ENCODE measurements at regions of chr11 and their contacts with region 1.

Region 1: DNA sequence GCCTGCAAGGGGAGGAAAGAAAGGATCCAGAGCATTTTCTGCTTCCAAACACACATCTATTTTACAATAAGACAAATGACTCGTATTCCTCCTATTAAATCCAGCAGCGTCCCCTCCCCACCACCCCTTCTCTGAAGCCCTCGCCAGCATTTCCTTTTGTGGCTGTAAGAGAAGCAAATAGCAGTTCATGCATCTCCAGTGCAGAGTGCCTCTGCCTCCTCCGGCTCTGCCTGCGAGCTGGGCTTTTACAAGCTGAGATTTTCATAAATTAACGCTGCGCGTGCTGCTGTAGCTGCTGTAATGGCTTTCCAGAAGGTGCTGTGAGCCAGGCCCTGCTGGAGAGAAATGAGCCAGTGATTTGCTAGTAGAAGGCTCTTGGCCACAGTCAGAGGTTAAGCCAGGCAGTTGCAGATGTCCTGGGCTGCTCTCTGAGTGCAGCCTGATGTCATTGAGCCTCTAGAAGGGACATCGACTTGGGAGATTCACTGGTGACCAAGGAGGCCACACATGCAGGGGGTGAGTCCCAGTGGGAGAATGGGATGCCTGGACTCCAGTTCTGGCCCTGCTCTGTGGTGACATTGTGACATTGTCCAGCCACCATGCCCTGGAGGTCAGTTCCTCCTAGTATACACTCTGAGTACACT is 134.5 kb upstream of the NAV2 start:
- DNase-seq: peak; percentile 57
- H3K4me3 ChIP-seq: peak overlapping the region in 1 of 2 experiments; percentile 7; a peak in 1 of 4 replicates
- H3K27ac ChIP-seq: peak overlapping the region; percentile 71 to 98
- H3K4me1 ChIP-seq: peaks cover 15 to 50% of the 10 kb centered on the region in 2 experiments
- H3K27me3 ChIP-seq: no peaks in the 10 kb centered on the region
- CTCF ChIP-seq: no peak
- EP300 ChIP-seq: peak in 1 of 2 experiments; percentile 75; a peak in 2 of 4 replicates
- RAD21 ChIP-seq: no peak; the same call in 1 of the 2 replicates

Region 2: DNA sequence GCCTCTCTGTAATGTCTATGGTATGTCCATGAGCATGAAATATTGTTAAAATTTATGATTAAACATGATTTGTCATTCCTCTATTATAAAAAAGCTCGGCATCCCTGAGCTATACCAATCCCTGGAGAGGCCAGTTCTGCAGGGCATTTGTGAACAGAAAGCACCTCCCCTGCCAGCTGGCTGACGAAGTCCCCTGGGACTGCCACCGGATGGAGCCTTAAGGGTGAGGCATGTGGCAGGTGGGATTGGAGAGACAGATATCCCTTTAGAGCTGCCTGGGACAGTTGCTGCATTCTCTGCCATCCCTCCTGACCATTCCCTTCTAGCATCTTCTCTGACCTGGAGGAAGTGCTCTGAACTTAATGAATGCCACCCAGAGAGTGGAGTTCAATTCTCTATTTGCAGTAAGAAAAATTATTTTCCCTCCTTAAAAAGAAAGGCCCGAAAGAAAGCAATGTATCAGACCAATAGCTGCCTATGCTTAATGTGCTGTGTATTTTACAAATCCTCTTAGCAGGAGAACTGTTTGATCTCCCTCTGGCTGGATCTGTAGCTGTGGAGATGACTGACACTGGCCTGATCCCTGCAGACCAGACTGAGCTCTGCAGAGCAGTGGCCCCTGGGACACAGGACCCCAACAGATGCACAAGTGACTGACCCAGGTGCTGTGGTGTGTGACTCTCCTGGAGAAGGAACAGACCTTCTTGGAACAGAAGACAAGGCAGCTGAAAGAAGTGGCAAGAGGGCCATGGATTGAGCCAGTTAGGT is 84.5 kb before region 1 on chr11:
- CTCF ChIA-PET with region 1: no interaction called
- POLR2A ChIA-PET with region 1: no interaction called
- DNase-seq: no peak
- H3K4me3 ChIP-seq: no peak overlapping the region
- H3K27ac ChIP-seq: no peak overlapping the region
- H3K4me1 ChIP-seq: no peaks in the 10 kb centered on the region; a peak in 1 of 4 replicates
- H3K27me3 ChIP-seq: no peaks in the 10 kb centered on the region; the same call in 1 of the 2 replicates
- CTCF ChIP-seq: no peak
- EP300 ChIP-seq: no peak
- RAD21 ChIP-seq: peak; percentile 16; the same call in 1 of the 2 replicates

Region 3: GRCh38 chr11:19566583-19567379 is 11.3 kb before region 1 on chr11:
- CTCF ChIA-PET with region 1: interaction called, 56 read pairs
- POLR2A ChIA-PET with region 1: no interaction called
- DNase-seq: no peak
- H3K4me3 ChIP-seq: no peak overlapping the region
- H3K27ac ChIP-seq: no peak overlapping the region
- H3K4me1 ChIP-seq: peaks cover 0 to 33% of the 10 kb centered on the region in 2 experiments; a peak in 2 of 4 replicates
- H3K27me3 ChIP-seq: no peaks in the 10 kb centered on the region
- CTCF ChIP-seq: no peak
- EP300 ChIP-seq: no peak
- RAD21 ChIP-seq: no peak

Measured in SK-N-SH (cell line).